ENCODE measurements at regions of chr7 and their contacts with region 1.

Region 1: DNA sequence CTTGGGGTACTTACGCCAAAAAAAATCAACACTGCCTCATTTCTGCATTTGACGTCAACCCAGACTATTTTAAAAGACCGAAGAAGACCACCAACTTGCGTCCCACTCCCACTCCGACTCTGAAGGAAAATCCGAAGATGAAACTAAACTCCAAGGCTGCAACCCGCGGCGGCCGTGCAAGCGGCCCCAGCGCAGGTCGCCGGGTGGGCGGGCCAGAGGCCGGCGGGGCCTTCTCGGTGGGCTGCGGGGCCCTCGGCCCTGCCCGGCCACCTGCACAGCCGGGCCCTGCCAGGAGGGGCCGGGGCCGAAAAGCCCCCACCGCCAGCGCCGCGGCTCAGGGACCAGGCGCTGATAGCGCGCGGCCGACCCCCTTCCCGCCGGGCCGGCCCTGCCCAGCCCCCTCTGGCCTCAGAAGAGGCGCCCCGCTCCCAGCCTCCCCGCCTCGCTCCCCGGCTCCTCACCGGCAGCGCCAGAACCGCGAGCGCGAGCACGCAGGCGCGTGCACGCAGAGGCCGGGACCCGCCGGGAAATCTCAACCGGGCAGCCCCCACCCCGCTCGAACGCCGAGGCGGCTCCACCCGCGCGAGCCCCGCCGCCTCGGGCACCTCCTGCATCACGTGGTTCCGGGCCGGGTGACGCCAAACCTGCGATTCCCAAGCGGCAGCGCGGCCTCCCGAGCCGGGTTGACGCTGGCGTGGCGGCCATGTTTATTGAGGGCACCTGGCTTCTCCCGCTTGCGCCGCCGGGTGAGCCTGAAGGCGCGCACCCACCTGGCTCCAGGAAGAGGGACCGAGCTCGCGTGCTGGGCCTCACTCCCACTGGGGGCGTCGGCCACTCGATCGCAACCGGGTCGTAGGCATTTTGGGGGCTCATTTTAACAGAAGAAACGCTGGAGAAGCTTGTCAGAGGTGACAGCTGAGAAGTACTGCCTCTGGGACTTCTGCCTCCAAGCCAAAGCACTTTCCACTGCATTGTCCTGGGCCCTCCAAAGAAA is at the start of gene C7orf25:
- DNase-seq: peak; percentile 96
- ATAC-seq: peak; percentile 94
- H3K4me3 Mint-ChIP-seq: peak within 1 kb of the TSS; percentile 91
- H3K27ac Mint-ChIP-seq: peak within 1 kb of the TSS; percentile 87
- H3K4me1 Mint-ChIP-seq: peaks cover 46% of the 10 kb centered on the region
- H3K27me3 Mint-ChIP-seq: no peaks in the 10 kb centered on the region
- CTCF ChIP-seq: no peak
- total RNA-seq, gene C7orf25: 4.5 and 5.5 TPM in 2 replicates

Region 2: DNA sequence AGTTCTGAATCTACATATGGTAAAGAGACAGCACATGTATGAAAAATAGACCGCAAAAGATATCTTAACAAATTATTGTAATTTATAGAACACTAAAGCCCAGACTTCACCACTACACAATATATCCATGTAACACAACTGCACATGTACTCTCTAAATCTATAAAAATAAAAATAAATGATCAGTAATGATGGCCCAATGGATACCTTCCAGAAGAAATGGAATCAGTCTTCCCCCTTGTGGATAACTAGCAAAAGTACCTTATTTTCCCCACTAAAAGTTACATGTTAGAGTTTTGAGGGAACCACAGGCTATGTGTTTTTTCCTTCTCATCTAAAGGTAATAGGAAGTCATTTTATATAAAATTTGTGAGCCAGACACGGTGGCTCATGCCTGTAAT is 25.6 kb before region 1 on chr7:
- CTCF ChIA-PET with region 1: interaction called, 3 read pairs
- POLR2A ChIA-PET with region 1: interaction called, 6 read pairs
- intact Hi-C with region 1: loop called (anchors 1 kb)
- DNase-seq: no peak
- ATAC-seq: no peak
- H3K4me3 Mint-ChIP-seq: no peak overlapping the region
- H3K27ac Mint-ChIP-seq: no peak overlapping the region
- H3K4me1 Mint-ChIP-seq: peaks cover 60% of the 10 kb centered on the region
- H3K27me3 Mint-ChIP-seq: no peaks in the 10 kb centered on the region
- CTCF ChIP-seq: no peak

Region 3: DNA sequence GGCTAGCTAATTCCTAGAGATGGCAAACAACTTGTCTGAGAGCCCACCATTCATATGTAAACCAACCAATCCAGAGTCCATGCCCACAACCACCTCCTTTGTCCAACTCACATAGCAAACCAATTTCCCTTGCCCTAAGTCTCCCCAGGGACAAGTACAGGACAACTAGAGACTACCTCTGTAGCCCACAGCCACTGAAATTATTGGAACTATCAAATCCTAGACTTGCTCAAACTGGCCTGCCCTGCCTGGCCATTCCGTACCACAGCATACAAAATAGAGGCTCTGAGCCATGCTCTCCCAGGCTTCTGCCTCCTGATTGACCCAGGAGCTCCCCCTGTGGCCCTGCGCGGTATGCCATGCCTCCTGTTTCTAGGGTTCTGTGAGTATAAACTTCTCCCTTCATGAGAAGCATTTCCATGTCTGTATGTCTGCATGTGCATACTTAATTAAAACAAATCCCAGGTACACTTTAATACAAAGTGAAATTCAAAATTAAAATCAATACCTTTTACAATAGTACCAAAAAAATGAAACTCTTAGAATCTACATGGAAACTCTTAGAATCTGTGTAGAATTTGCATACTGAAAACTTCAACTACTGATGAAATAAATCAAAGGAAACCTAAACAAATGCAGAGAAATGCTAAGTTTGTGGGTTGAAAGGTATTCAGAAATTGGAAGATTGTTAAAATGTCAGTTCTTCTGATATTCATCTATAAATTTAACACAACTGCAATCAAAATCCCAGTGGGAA is 196.7 kb after region 1 on chr7:
- CTCF ChIA-PET with region 1: no interaction called
- POLR2A ChIA-PET with region 1: no interaction called
- intact Hi-C with region 1: no loop called
- DNase-seq: peak; percentile 30
- ATAC-seq: peak; percentile 56
- H3K4me3 Mint-ChIP-seq: no peak overlapping the region
- H3K27ac Mint-ChIP-seq: no peak overlapping the region
- H3K4me1 Mint-ChIP-seq: peaks cover 2% of the 10 kb centered on the region
- H3K27me3 Mint-ChIP-seq: peaks cover 34% of the 10 kb centered on the region
- CTCF ChIP-seq: peak; percentile 59